ENCODE measurements at regions of chr3 and their contacts with region 1.

Region 1: GRCh38 chr3:141460097-141460704 is 26.6 kb upstream of the RASA2 start:
- H3K4me3 Mint-ChIP-seq: no peak overlapping the region
- H3K27ac Mint-ChIP-seq: no peak overlapping the region
- H3K4me1 Mint-ChIP-seq: peaks cover 6% of the 10 kb centered on the region
- H3K27me3 Mint-ChIP-seq: no peaks in the 10 kb centered on the region

Region 2: GRCh38 chr3:141561426-141562034 is 101.3 kb after region 1 on chr3:
- intact Hi-C with region 1: loop called (anchors 1 kb)
- H3K4me3 Mint-ChIP-seq: no peak overlapping the region
- H3K27ac Mint-ChIP-seq: no peak overlapping the region
- H3K4me1 Mint-ChIP-seq: no peaks in the 10 kb centered on the region
- H3K27me3 Mint-ChIP-seq: no peaks in the 10 kb centered on the region

Region 3: DNA sequence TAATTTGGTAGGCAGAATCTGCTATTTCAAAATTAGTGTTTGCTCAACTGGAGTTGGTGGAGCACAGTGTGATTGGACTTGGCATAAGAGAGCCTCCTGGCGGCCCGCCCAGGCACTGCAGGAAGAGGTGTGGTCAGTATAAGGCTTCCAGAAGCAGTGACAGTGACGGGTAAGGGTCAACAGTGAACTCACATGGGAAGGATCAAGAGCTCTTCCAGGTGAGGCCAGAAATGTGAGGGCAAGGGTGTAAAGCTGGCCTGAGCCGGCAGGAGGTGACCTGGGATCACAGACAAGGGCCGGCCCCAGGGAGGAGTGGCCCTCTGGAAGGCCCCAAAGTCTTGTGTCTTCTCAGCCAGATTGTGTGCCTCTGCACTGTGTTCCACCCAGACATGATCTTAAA is 184.7 kb after region 1 on chr3:
- intact Hi-C with region 1: loop called (anchors 2 kb)
- H3K4me3 Mint-ChIP-seq: no peak overlapping the region
- H3K27ac Mint-ChIP-seq: no peak overlapping the region
- H3K4me1 Mint-ChIP-seq: peaks cover 12% of the 10 kb centered on the region
- H3K27me3 Mint-ChIP-seq: no peaks in the 10 kb centered on the region

Region 4: GRCh38 chr3:141913150-141913811 is 453.1 kb after region 1 on chr3:
- intact Hi-C with region 1: loop called (anchors 5 kb)
- H3K4me3 Mint-ChIP-seq: no peak overlapping the region
- H3K27ac Mint-ChIP-seq: no peak overlapping the region
- H3K4me1 Mint-ChIP-seq: no peaks in the 10 kb centered on the region
- H3K27me3 Mint-ChIP-seq: no peaks in the 10 kb centered on the region

Measured in dendritic cell treated with granulocyte-macrophage colony-stimulating factor and Interleukin-4, amounts not matched to agents 40 ng/mL and 50 ng/mL, for 4 days (primary cell).